ENCODE measurements at regions of chr14 and their contacts with region 1.

Region 1: DNA sequence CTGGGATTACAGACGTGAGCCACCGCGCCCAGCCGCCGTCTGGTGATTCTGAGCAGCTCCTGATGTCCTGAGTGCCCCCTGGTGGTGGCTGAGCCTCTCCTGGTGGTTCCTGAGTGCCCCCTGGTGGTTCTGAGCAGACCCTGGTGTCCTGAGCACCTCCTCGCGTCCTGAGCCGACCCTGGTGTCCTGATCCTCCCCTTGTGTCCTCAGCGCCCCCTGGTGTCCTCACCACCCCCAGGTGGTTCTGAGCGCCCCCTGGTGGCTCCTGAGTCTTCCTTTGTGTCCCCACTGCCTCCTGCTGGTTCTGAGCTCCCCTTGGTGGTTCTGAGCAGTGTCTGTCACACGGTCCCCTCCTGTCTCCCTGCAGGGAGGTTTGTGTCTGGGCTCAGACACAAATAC is 1304.9 kb downstream of the TMEM121 start:
- DNase-seq: peak; percentile 90
- ATAC-seq: peak; percentile 65
- H3K4me3 Mint-ChIP-seq: no peak overlapping the region
- H3K27ac Mint-ChIP-seq: no peak overlapping the region
- H3K4me1 Mint-ChIP-seq: no peaks in the 10 kb centered on the region
- H3K27me3 Mint-ChIP-seq: no peaks in the 10 kb centered on the region

Region 2: GRCh38 chr14:106318700-106319099 is 512.6 kb before region 1 on chr14:
- CTCF ChIA-PET with region 1: no interaction called
- POLR2A ChIA-PET with region 1: no interaction called
- intact Hi-C with region 1: no loop called
- DNase-seq: peak; percentile 83
- ATAC-seq: peak; percentile 80
- H3K4me3 Mint-ChIP-seq: no peak overlapping the region
- H3K27ac Mint-ChIP-seq: no peak overlapping the region
- H3K4me1 Mint-ChIP-seq: no peaks in the 10 kb centered on the region
- H3K27me3 Mint-ChIP-seq: no peaks in the 10 kb centered on the region

Region 3: DNA sequence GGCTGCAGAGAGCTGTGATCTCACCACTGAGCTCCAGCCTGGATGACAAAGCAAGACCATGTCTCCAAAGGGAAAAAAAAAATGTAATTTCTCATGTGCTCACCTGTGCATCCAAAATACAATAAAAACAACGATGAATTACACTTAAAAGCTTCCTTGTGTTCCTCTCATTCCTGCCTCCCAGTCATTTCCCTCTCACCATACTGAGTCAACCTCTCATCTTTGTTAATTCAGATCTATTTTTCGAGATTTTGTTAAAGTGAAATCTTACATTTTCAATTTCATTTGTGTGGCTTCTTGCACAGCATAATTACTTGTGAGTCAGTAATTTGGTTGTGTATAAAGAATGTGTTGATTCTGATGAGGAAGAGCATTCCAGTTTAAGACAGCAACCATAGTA is 101.8 kb before region 1 on chr14:
- CTCF ChIA-PET with region 1: no interaction called
- POLR2A ChIA-PET with region 1: no interaction called
- intact Hi-C with region 1: no loop called
- DNase-seq: no peak
- ATAC-seq: peak; percentile 42
- H3K4me3 Mint-ChIP-seq: no peak overlapping the region
- H3K27ac Mint-ChIP-seq: no peak overlapping the region
- H3K4me1 Mint-ChIP-seq: peaks cover 14% of the 10 kb centered on the region
- H3K27me3 Mint-ChIP-seq: no peaks in the 10 kb centered on the region

Region 4: GRCh38 chr14:106790189-106791036 is 40.9 kb before region 1 on chr14:
- CTCF ChIA-PET with region 1: interaction called, 37 read pairs
- POLR2A ChIA-PET with region 1: no interaction called
- intact Hi-C with region 1: no loop called
- DNase-seq: peak; percentile 91
- ATAC-seq: peak; percentile 87
- H3K4me3 Mint-ChIP-seq: no peak overlapping the region
- H3K27ac Mint-ChIP-seq: no peak overlapping the region
- H3K4me1 Mint-ChIP-seq: peaks cover 9% of the 10 kb centered on the region
- H3K27me3 Mint-ChIP-seq: peaks cover 6% of the 10 kb centered on the region

Region 5: GRCh38 chr14:106802423-106803364 is 28.6 kb before region 1 on chr14:
- CTCF ChIA-PET with region 1: interaction called, 13 read pairs
- POLR2A ChIA-PET with region 1: no interaction called
- intact Hi-C with region 1: no loop called
- DNase-seq: peak; percentile 27
- ATAC-seq: no peak
- H3K4me3 Mint-ChIP-seq: no peak overlapping the region
- H3K27ac Mint-ChIP-seq: no peak overlapping the region
- H3K4me1 Mint-ChIP-seq: no peaks in the 10 kb centered on the region
- H3K27me3 Mint-ChIP-seq: peaks cover 22% of the 10 kb centered on the region

Region 6: GRCh38 chr14:106812788-106813476 is 18.4 kb before region 1 on chr14:
- CTCF ChIA-PET with region 1: interaction called, 19 read pairs
- POLR2A ChIA-PET with region 1: interaction called, 3 read pairs
- intact Hi-C with region 1: no loop called
- DNase-seq: no peak
- ATAC-seq: no peak
- H3K4me3 Mint-ChIP-seq: no peak overlapping the region
- H3K27ac Mint-ChIP-seq: no peak overlapping the region
- H3K4me1 Mint-ChIP-seq: peaks cover 9% of the 10 kb centered on the region
- H3K27me3 Mint-ChIP-seq: peaks cover 2% of the 10 kb centered on the region

Region 7: DNA sequence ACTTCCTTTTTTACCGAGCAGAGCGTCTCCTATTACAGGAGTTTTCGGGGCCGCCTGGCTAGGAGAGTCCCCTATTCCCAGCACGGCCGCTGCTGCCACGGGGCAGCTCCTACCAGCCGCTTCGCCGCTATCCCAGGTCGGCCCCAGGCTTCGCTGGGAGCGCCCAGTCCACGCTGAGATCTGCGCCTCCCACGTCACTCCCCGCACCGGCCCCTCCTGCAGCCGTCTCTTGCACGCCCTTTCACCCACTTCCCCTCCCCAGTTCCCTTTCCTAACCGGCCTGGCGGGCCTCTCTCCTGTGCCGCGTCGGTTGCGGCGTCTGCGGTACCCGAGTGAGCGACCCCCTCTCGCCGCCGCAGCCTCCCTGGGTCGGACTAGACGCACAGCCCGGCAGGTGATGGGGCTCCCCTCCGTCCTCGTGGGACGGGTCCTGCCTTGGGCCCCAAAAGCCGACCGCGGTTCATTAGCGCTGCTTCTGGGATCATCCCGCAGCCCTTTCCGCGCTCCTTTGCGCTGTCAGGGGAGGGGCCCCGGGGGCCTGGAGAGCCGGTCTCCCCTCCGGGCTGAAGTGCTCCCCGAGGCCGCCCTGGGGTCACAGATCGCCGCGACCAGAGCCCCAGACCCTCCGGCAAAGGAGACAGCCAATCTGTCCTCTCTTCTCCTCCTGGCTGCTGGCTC is 13.4 kb after region 1 on chr14:
- CTCF ChIA-PET with region 1: interaction called, 115 read pairs
- POLR2A ChIA-PET with region 1: interaction called, 4 read pairs
- intact Hi-C with region 1: loop called in 1 of 2 experiments (anchors 1 kb)
- DNase-seq: peak; percentile 74
- ATAC-seq: peak; percentile 68
- H3K4me3 Mint-ChIP-seq: peak overlapping the region; percentile 81
- H3K27ac Mint-ChIP-seq: peak overlapping the region; percentile 85
- H3K4me1 Mint-ChIP-seq: peaks cover 37% of the 10 kb centered on the region
- H3K27me3 Mint-ChIP-seq: no peaks in the 10 kb centered on the region

Region 8: GRCh38 chr14:106872611-106873446 is 41.5 kb after region 1 on chr14:
- CTCF ChIA-PET with region 1: interaction called, 82 read pairs
- POLR2A ChIA-PET with region 1: interaction called, 5 read pairs
- intact Hi-C with region 1: loop called in 1 of 2 experiments (anchors 1 kb)
- DNase-seq: peak; percentile 95
- ATAC-seq: peak; percentile 89
- H3K4me3 Mint-ChIP-seq: peak overlapping the region; percentile 16
- H3K27ac Mint-ChIP-seq: peak overlapping the region; percentile 63
- H3K4me1 Mint-ChIP-seq: peaks cover 21% of the 10 kb centered on the region
- H3K27me3 Mint-ChIP-seq: peaks cover 20% of the 10 kb centered on the region

Measured in activated CD4-positive, alpha-beta T cell treated with anti-CD3 and anti-CD28 coated beads for 36 hours (primary cell).